ENCODE measurements at regions of chr12 and their contacts with region 1.

Region 1: DNA sequence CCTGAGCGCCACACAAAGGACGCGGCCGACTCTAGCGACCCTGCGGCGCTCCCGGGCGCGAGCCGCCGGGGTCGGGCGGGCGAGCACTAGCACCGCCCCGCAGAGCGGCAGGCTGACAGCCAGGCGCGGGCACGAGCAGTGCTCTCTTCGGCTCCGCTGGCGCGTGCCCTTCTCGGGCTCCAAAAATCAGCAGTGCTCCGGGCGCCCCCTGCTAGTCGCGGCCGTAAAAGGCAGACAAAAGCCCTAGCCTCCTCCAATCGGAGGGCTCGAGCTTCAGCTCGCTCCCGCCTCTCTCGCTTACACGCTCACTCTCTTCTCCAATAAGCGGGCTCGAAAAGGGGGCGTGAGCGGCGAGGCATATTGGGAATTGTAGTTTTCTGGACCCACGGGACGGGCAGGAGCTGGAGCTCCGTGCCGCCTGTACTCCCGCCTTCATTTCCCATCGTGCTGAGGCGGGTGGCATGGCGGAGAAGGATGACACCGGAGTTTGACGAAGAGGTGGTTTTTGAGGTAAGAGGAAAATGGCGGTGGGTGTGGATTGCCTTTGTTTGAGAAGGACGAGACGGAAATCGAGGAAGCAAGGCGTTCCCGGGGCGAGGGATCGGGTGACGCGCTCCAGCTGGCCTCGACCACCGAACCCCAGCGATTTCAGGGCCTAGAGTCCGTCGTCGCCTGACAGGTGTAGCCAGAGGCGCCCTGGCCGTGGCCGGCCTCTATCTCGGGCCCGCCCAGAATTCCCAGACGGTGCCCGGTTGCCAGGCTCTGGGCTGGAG is at the starts of genes FGD6 and VEZT:
- DNase-seq: peak; percentile 98
- ATAC-seq: peak; percentile 91
- H3K4me3 ChIP-seq: peak within 1 kb of the TSS; percentile 98
- H3K27ac ChIP-seq: peak within 1 kb of the TSS; percentile 86
- H3K4me1 ChIP-seq: no peaks in the 10 kb centered on the region
- H3K27me3 ChIP-seq: no peaks in the 10 kb centered on the region
- CTCF ChIP-seq: peak; percentile 52 to 73 (median 53); a peak in 5 of 6 replicates
- EP300 ChIP-seq: no peak
- POLR2A ChIP-seq: peak; percentile 89
- RAD21 ChIP-seq: peak; percentile 70
- polyA plus RNA-seq, gene FGD6: 2.4 to 3.3 TPM
- polyA plus RNA-seq, gene VEZT: 32.8 to 35.6 TPM

Region 2: GRCh38 chr12:95117178-95117599 is 100.4 kb before region 1 on chr12:
- CTCF ChIA-PET with region 1: interaction called, 46 read pairs
- POLR2A ChIA-PET with region 1: interaction called, 4 read pairs
- RAD21 ChIA-PET with region 1: interaction called, 16 read pairs
- SMC1A ChIA-PET with region 1: interaction called, 13 read pairs
- in situ Hi-C with region 1: no loop called
- intact Hi-C with region 1: loop called (anchors 1 kb)
- DNase-seq: peak; percentile 38
- ATAC-seq: peak; percentile 97
- H3K4me3 ChIP-seq: no peak overlapping the region
- H3K27ac ChIP-seq: no peak overlapping the region
- H3K4me1 ChIP-seq: peaks cover 4% of the 10 kb centered on the region
- H3K27me3 ChIP-seq: no peaks in the 10 kb centered on the region
- CTCF ChIP-seq: peak; percentile 39 to 73 (median 54); a peak in 5 of 6 replicates
- EP300 ChIP-seq: no peak
- POLR2A ChIP-seq: no peak
- RAD21 ChIP-seq: peak; percentile 76

Region 3: GRCh38 chr12:95198914-95199313 is 18.6 kb before region 1 on chr12:
- CTCF ChIA-PET with region 1: interaction called, 7 read pairs
- POLR2A ChIA-PET with region 1: interaction called, 21 read pairs
- RAD21 ChIA-PET with region 1: interaction called, 38 read pairs
- SMC1A ChIA-PET with region 1: interaction called, 43 read pairs
- in situ Hi-C with region 1: no loop called
- intact Hi-C with region 1: loop called (anchors 2 kb)
- DNase-seq: peak; percentile 49
- ATAC-seq: peak; percentile 86
- H3K4me3 ChIP-seq: peak overlapping the region; percentile 56; the same call in 1 of the 2 replicates
- H3K27ac ChIP-seq: peak overlapping the region; percentile 87
- H3K4me1 ChIP-seq: peaks cover 33% of the 10 kb centered on the region
- H3K27me3 ChIP-seq: no peaks in the 10 kb centered on the region
- CTCF ChIP-seq: no peak
- EP300 ChIP-seq: no peak
- POLR2A ChIP-seq: no peak
- RAD21 ChIP-seq: no peak

Region 4: DNA sequence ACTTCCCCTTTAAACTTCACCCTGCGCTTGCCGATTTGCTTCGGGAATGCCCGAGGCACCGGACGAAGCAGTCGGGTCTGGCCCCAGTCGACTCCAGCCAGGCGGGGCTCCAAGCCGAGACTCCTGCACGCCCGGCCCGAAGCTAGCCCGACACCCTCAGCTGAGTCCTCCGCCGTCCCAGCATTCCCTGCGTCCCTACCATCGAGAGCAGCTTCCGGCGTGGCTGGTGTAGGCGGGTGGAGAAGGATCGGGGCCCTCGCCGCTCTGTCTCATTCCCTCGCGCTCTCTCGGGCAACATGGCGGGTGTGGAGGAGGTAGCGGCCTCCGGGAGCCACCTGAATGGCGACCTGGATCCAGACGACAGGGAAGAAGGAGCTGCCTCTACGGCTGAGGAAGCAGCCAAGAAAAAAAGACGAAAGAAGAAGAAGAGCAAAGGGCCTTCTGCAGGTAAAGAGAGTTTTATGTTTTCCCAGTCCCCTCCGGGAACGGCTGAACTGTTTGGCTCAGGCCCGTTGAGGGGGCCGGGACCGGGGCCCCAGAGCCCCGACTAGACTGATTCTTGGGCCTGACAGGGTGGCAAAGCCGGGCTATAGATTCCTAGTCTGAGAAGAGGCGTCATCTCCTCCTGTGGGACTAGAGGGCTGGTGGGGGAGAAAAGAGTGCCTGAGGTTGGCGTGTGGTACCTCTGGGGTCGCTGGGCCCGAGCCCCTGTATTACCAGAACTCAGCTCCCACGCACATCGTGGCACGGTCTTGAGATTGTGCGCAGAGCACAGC is 256.5 kb after region 1 on chr12 and contains the start of gene METAP2:
- CTCF ChIA-PET with region 1: interaction called, 3 read pairs
- POLR2A ChIA-PET with region 1: interaction called, 4 read pairs
- RAD21 ChIA-PET with region 1: interaction called, 5 read pairs
- SMC1A ChIA-PET with region 1: interaction called, 4 read pairs
- in situ Hi-C with region 1: no loop called
- intact Hi-C with region 1: loop called (anchors 2 kb)
- DNase-seq: peak; percentile 84
- ATAC-seq: peak; percentile 98
- H3K4me3 ChIP-seq: peak within 1 kb of the TSS; percentile 98
- H3K27ac ChIP-seq: peak within 1 kb of the TSS; percentile 87
- H3K4me1 ChIP-seq: no peaks in the 10 kb centered on the region
- H3K27me3 ChIP-seq: no peaks in the 10 kb centered on the region
- CTCF ChIP-seq: no peak
- EP300 ChIP-seq: no peak
- POLR2A ChIP-seq: peak; percentile 99
- RAD21 ChIP-seq: no peak
- polyA plus RNA-seq, gene METAP2: 50.7 to 83.6 TPM

Region 5: GRCh38 chr12:95571369-95571768 is 353.8 kb after region 1 on chr12:
- CTCF ChIA-PET with region 1: no interaction called
- POLR2A ChIA-PET with region 1: interaction called, 10 read pairs
- RAD21 ChIA-PET with region 1: no interaction called
- SMC1A ChIA-PET with region 1: no interaction called
- in situ Hi-C with region 1: no loop called
- intact Hi-C with region 1: no loop called
- DNase-seq: no peak
- ATAC-seq: no peak; the same call in 2 of the 3 replicates
- H3K4me3 ChIP-seq: no peak overlapping the region
- H3K27ac ChIP-seq: no peak overlapping the region
- H3K4me1 ChIP-seq: peaks cover 9% of the 10 kb centered on the region
- H3K27me3 ChIP-seq: no peaks in the 10 kb centered on the region
- CTCF ChIP-seq: no peak
- EP300 ChIP-seq: no peak
- POLR2A ChIP-seq: no peak
- RAD21 ChIP-seq: no peak